Caco-2 (cell line): ENCODE measurements at regions of chr1 and their contacts with region 1.

Region 1: GRCh38 chr1:156212833-156213643 is at the start of gene PMF1:
- DNase-seq: peak; percentile 97
- H3K4me3 ChIP-seq: peak within 1 kb of the TSS; percentile 90
- H3K4me3 Mint-ChIP-seq: peak within 1 kb of the TSS; percentile 96
- H3K27ac Mint-ChIP-seq: peak within 1 kb of the TSS; percentile 98
- H3K4me1 ChIP-seq: peaks cover 12% of the 10 kb centered on the region
- H3K4me1 Mint-ChIP-seq: peaks cover 23% of the 10 kb centered on the region
- H3K27me3 ChIP-seq: no peaks in the 10 kb centered on the region
- H3K27me3 Mint-ChIP-seq: no peaks in the 10 kb centered on the region
- CTCF ChIP-seq: no peak
- total RNA-seq, gene PMF1: 90.2 and 95.7 TPM in 2 replicates

Region 2: DNA sequence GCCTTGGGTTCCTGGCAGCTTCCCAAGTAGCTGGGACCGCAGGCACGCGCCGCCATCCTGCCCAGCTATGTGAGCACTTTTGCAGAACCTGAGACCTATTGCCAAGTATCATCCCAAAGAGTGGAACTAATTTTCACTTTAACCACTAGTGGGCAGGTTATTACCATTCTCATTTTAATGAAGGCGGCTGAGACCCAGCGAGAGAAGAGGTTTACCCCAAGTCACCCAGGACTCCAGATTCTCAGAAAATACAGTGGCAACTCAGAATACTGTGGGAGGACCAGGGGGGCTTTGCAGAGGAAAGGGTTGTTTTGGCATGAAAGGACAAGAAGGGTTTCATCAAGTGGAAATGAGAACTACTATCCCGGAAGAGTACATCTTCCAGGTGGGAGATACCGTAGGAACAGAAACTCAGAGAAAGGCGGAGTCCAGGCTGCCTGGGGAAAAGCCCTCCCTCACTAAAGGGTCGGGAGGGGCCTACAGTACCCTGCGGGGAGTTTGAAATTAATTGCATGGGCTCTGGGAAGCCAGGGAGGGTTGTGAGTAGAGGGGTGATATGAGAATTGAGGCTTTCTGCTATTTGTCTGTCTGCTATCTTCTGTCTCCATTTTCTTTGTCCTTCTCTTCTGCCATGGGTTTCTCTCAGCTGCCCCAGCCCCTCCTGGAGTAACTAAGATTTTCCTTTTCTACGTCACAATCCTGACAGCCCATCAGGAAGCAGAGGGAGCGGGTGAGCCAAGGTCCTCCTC is 66.8 kb before region 1 on chr1:
- CTCF ChIA-PET with region 1: interaction called, 16 read pairs
- POLR2A ChIA-PET with region 1: interaction called, 7 read pairs
- intact Hi-C with region 1: loop called (anchors 5 kb)
- DNase-seq: peak in 1 of 2 experiments; percentile 74
- H3K4me3 ChIP-seq: peak overlapping the region; percentile 22; the same call in 1 of the 2 replicates
- H3K4me3 Mint-ChIP-seq: peak overlapping the region; percentile 68
- H3K27ac Mint-ChIP-seq: peak overlapping the region; percentile 88
- H3K4me1 ChIP-seq: peaks cover 11% of the 10 kb centered on the region
- H3K4me1 Mint-ChIP-seq: peaks cover 20% of the 10 kb centered on the region
- H3K27me3 ChIP-seq: no peaks in the 10 kb centered on the region
- H3K27me3 Mint-ChIP-seq: no peaks in the 10 kb centered on the region
- CTCF ChIP-seq: peak; percentile 65 to 78

Region 3: DNA sequence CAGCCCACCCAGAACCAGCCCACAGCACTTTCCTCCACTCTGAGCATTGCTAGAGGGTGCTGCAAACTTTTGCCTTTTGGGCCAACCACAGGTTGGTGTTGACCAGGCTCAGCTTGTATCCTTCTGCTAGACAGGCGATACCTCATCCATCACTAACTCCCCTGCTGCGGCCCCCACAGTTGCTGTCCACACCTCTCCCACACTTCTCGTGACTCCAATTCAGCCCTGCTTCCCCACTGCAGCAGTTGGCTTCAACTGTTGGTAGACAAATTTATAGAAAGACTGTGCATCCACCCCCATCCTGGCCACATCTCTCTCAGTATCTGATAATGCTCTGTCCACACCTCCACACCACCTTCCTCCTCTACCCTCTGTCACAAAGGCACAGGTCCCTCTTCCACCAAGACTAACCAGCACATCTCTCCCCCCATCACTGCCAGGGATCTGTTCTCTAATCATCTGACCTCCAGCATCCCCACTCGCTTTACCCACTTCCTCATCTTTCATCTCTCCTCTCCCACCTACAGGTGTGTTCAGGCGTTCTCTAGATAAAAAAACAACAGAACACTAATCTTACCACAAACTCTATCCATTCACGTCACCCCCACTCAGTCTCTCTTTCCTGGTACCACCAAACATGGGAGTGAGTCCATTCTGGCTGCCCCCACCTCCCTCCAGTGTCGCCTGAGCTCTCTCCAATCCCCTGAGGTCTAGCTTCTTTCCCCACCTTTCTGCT is 35.0 kb before region 1 on chr1:
- CTCF ChIA-PET with region 1: no interaction called
- POLR2A ChIA-PET with region 1: no interaction called
- intact Hi-C with region 1: loop called (anchors 2 kb)
- DNase-seq: no peak
- H3K4me3 ChIP-seq: no peak overlapping the region
- H3K4me3 Mint-ChIP-seq: no peak overlapping the region
- H3K27ac Mint-ChIP-seq: peak overlapping the region; percentile 38
- H3K4me1 ChIP-seq: peaks cover 50% of the 10 kb centered on the region
- H3K4me1 Mint-ChIP-seq: peaks cover 27% of the 10 kb centered on the region
- H3K27me3 ChIP-seq: no peaks in the 10 kb centered on the region
- H3K27me3 Mint-ChIP-seq: no peaks in the 10 kb centered on the region
- CTCF ChIP-seq: no peak

Region 4: DNA sequence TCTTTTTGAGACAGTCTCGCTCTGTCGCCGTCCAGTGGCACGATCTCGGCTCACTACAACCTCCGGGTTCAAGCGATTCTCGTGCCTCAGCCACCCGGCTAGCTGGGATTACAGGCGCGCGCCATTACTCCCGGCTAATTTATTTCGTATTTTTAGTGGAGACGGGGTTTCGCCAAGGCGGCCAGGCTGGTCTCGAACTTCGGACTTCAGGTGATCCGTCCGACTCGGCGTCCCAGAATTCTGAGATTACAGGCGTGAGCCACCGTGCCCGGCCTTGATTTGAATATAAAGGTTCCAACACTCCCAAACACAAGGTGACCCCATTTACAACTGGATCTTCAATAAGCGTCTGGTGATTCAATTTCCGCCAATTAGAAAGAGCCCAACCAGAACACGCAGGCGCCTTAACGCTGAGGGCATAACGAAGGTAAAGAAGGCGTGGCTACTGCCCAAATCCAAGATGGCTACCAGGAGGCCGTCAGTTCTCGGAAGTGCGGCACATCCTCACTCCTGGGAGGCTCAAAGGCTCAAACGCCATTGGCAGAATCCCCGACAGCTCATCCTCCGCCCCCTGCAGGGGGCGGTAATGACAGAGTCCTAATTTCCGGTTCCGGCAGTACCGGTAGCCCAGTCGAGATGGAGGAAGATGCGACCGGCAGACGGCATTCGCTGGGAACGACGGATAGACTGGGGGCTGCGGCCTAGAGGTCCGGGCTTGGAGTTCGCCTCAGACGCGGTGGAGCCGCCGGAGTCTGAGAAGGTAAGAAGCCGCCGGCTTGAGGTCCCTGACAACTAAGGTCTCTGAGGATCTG is 19.3 kb before region 1 on chr1 and contains the start of gene SLC25A44:
- CTCF ChIA-PET with region 1: interaction called, 7 read pairs
- POLR2A ChIA-PET with region 1: interaction called, 26 read pairs
- intact Hi-C with region 1: loop called (anchors 2 kb)
- DNase-seq: peak; percentile 97
- H3K4me3 ChIP-seq: peak within 1 kb of the TSS; percentile 85
- H3K4me3 Mint-ChIP-seq: peak within 1 kb of the TSS; percentile 92
- H3K27ac Mint-ChIP-seq: peak within 1 kb of the TSS; percentile 82
- H3K4me1 ChIP-seq: peaks cover 9% of the 10 kb centered on the region; the same call in 1 of the 2 replicates
- H3K4me1 Mint-ChIP-seq: peaks cover 16% of the 10 kb centered on the region
- H3K27me3 ChIP-seq: no peaks in the 10 kb centered on the region
- H3K27me3 Mint-ChIP-seq: no peaks in the 10 kb centered on the region
- CTCF ChIP-seq: peak; percentile 51 to 69
- total RNA-seq, gene SLC25A44: 29.3 and 31.1 TPM in 2 replicates

Region 5: DNA sequence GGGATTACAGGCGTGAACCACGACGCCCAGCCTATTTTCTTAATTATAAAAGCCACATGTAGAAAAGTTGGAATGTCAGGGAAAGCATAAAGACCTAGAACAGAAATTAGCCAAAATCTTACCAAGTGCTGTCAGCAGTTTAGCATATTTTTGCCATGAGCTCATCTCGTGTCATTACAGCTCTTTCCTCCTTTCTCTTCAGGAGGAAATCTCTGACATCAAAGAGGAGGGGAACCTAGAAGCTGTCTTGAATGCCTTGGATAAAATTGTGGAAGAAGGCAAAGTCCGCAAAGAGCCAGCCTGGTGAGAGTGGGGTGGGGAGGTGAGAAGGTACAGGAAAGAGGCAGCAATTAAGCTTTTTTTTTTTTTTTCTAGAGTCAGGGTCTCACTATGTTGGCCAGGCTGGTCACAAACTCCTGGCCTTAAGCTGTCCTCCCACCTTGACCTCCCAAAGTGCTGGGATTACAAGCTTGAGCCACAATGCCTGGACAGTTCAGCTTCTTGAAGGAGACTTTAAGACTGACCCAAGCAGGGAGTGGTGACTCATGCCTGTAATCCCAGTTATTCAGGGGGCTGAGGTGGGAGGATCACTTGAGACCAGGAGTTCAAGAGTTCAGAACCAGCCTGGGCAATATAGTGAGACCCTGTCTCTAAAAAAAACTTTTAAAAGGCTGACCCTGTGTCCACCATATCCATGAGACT is 20.5 kb after region 1 on chr1:
- CTCF ChIA-PET with region 1: interaction called, 3 read pairs
- POLR2A ChIA-PET with region 1: interaction called, 10 read pairs
- intact Hi-C with region 1: no loop called
- DNase-seq: no peak
- H3K4me3 ChIP-seq: no peak overlapping the region
- H3K4me3 Mint-ChIP-seq: peak overlapping the region; percentile 44
- H3K27ac Mint-ChIP-seq: peak overlapping the region; percentile 83
- H3K4me1 ChIP-seq: peaks cover 19% of the 10 kb centered on the region
- H3K4me1 Mint-ChIP-seq: peaks cover 8% of the 10 kb centered on the region
- H3K27me3 ChIP-seq: no peaks in the 10 kb centered on the region
- H3K27me3 Mint-ChIP-seq: no peaks in the 10 kb centered on the region
- CTCF ChIP-seq: no peak

Region 6: DNA sequence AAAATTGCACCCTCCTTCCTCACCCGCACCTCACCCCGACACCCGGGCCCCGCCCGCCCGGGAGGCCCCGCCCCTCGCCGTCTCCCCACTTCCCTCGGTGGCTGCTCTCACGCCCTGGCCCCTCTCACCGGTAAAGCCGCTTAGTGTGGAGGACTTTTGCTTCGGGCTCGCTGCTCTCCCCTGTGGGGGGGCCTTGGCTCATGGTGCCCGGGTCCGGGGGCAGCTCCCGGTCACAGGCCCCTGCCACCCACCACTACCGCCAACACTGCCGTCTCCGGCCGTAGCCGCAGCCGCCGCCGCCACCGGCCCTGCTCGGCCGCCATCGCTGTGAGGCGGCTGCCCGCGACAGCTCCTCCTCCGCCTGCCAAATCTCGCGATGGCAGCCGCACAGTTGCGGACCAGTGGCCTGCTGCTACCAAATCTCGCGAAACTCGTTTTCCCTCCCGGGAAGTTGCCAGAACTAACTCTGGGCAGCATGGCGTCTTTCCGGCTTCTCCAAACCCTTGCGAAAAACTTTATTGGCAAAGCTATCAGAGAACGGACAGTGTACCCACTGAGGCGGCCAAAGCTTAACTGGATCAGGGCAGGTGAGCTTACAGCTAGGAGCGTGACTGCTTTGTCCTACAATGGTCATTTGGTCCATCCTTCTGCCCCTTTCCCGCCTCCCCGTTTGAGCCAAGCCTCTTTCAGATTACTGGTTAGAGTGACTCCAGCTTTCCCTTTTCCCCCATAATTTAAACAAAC is 69.6 kb after region 1 on chr1 and contains the start of gene SMG5:
- CTCF ChIA-PET with region 1: no interaction called
- POLR2A ChIA-PET with region 1: interaction called, 13 read pairs
- intact Hi-C with region 1: no loop called
- DNase-seq: peak; percentile 98
- H3K4me3 ChIP-seq: peak within 1 kb of the TSS; percentile 78
- H3K4me3 Mint-ChIP-seq: peak within 1 kb of the TSS; percentile 78
- H3K27ac Mint-ChIP-seq: peak within 1 kb of the TSS; percentile 61
- H3K4me1 ChIP-seq: peaks cover 24% of the 10 kb centered on the region
- H3K4me1 Mint-ChIP-seq: peaks cover 17% of the 10 kb centered on the region
- H3K27me3 ChIP-seq: no peaks in the 10 kb centered on the region
- H3K27me3 Mint-ChIP-seq: no peaks in the 10 kb centered on the region
- CTCF ChIP-seq: no peak
- total RNA-seq, gene SMG5: 146 and 155 TPM in 2 replicates

Region 7: GRCh38 chr1:156435545-156436141 is 222.6 kb after region 1 on chr1:
- CTCF ChIA-PET with region 1: no interaction called
- POLR2A ChIA-PET with region 1: no interaction called
- intact Hi-C with region 1: no loop called
- DNase-seq: no peak
- H3K4me3 ChIP-seq: peak overlapping the region; percentile 3; the same call in 1 of the 2 replicates
- H3K4me3 Mint-ChIP-seq: peak overlapping the region; percentile 69
- H3K27ac Mint-ChIP-seq: no peak overlapping the region
- H3K4me1 ChIP-seq: peaks cover 4% of the 10 kb centered on the region; the same call in 1 of the 2 replicates
- H3K4me1 Mint-ChIP-seq: peaks cover 12% of the 10 kb centered on the region
- H3K27me3 ChIP-seq: peaks cover 3% of the 10 kb centered on the region; the same call in 1 of the 2 replicates
- H3K27me3 Mint-ChIP-seq: peaks cover 48% of the 10 kb centered on the region
- CTCF ChIP-seq: no peak